Left colon (tissue), 2 donors: ENCODE measurements at regions of chr13 and their contacts with region 1.

Region 1: DNA sequence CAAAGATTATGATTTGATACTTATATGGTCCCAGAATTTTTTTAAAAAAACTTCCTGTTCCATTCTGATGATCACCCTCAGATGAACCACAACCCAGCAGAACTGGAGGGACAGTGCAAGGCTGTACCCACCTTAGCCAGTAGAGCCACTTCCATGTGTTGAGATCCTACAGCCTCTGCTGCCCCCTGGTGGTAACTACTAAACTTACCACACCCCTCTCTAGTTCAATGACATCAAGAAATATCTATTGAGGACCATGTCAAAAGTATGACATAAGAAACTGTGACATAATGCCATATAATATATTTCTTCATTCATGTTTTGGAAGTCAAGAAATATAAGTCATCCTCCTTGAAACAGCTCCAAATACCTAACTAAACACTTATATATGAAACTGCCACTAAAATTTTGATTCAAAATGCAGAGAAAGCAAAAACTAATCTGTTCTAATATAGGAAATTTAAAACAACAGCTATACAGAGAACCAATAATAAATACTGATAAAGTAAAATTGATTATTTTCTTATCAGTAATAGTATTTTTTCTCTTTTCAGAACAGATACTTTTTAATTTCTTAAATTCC is 412.6 kb downstream of the KCTD12 start:
- DNase-seq: peak; percentile 54 to 65
- ATAC-seq: peak; percentile 87

Region 2: GRCh38 chr13:75691183-75691582 is 782.5 kb before region 1 on chr13:
- intact Hi-C with region 1: loop called in 1 of 2 experiments (anchors 10 kb)
- DNase-seq: no peak
- ATAC-seq: no peak

Region 3: DNA sequence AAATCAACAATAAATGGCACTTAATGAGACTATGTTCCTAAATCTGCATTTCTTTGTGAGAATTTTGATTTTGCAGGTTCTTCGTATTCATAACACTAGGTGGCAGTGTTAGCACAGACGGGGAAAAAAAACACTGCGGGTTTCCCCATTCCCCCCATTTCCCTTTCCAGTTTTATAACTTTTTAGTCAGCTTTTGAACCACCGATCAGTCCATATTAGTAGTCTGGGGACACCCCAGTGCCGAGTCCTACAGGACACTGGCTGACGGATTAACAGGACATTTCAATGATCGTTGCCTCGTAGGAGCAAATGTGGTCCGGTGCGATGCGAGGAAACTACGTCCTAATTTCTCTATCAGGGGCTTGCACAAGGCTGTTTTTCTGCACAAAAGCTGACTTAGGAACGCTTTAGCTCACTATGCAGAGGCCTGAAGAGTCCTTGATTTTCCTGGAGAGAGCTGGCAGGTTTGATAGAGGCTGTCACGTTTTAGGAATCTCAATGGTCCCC is 603.2 kb before region 1 on chr13:
- intact Hi-C with region 1: loop called (anchors 5 to 10 kb)
- DNase-seq: no peak
- ATAC-seq: no peak

Region 4: DNA sequence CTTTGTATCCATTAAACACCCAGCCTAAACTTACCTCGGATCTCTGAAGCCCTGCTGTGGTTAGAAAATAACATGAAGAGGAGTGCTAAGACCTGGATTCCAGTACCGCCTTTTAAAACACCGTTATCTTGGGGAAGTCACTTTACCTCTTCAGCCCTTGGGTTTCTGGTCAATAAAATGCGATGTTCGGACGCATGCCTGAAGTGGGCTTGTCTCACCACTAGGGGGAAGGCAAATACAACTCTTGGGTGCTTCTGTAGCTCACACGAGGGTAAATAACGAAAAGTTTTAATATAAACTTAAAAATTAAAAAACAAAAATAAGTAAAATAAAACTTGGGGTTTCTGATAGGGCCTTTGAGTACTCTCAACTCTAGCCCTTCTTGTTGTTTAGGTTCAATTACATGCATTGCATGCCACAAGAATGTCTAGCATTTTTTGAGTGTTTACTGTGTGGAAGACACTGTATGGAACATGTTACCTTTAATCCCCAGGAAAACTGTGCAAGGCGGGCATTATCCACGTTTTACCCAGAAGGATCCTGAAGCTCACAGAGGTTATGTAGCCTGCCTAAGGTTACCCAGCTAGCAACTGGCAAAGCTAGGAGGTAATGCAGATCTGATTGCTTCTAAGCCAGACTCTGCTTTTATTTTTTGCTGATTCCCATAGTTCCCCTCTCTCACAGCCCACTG is 597.1 kb before region 1 on chr13:
- intact Hi-C with region 1: loop called (anchors 5 to 10 kb)
- DNase-seq: peak; percentile 26 to 44
- ATAC-seq: peak; percentile 86

Region 5: DNA sequence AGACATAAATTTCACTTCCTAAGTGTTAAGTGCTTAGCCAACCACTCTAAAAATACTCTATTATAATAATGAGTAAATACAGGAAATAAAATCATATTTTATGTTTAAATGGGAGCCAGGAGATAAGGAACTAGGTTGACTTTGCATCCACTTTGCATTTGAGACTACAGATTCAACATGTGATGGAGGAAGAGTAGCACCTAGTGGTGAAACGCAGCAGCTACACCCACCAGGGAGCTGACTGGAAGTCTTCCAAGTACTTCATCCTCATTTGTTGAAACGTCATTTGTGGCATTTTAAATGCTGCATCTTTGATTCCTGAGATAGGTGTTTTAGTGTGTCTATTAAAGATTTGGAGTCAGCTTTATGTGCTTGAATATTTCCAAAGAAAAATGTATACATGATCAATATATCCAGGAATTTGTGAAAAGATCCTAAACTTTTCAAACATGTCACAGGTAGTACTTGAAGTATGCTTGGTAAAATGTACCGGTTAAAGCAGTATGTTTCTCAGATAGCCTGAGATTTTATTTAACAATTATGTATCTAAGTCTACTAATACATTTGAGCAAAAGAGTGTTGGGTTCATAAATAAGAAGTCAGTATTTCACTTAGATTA is 430.0 kb after region 1 on chr13:
- intact Hi-C with region 1: loop called in 1 of 2 experiments (anchors 10 kb)
- DNase-seq: peak; percentile 36 to 70
- ATAC-seq: peak; percentile 92